ENCODE measurements at regions of chr12 and their contacts with region 1.

Region 1: DNA sequence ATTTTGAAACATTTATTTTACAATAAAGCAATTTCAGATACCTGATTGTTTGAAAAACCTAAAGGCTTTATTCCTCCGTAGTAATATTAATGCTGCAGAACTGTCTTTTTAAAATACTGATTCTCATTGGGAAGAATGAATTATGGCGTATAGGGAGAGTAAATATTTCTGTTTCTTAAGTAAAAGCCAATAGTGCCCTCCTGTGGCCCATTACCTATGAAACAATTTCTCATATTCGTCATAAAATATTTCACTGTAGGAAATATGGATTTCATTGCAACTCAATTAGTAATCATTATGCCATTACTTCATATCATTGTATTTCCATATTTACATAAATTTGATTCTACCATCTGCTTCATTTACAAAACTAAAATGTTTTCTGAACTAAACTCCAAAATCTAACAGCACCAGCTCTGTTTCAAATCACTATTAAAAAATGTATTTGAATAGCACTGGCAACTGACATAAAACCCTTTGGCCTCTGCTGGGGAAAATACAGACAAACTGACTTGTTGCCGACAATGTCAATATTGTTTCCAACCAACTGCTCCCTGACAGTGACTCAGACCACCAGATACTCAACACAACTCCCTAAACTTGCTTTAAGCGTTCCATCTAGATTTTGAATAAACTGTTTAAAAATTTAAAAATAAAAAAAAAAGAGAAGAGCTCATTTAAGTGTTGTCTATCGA is 290.3 kb downstream of the NAV3 start:
- DNase-seq: no peak
- ATAC-seq: no peak
- H3K4me3 ChIP-seq: no peak overlapping the region
- H3K27ac ChIP-seq: no peak overlapping the region
- H3K4me1 ChIP-seq: no peaks in the 10 kb centered on the region
- H3K27me3 ChIP-seq: no peaks in the 10 kb centered on the region
- CTCF ChIP-seq: peak in 4 of 9 donors; percentile 22 to 46 (median 35)

Region 2: GRCh38 chr12:77686760-77687159 is 434.3 kb before region 1 on chr12:
- intact Hi-C with region 1: no loop called
- DNase-seq: no peak
- ATAC-seq: no peak
- H3K4me3 ChIP-seq: no peak overlapping the region
- H3K27ac ChIP-seq: no peak overlapping the region
- H3K4me1 ChIP-seq: peaks cover 0 to 6% (median 0%) of the 10 kb centered on the region in 9 donors
- H3K27me3 ChIP-seq: no peaks in the 10 kb centered on the region
- CTCF ChIP-seq: peak in 1 of 9 donors; percentile 8

Region 3: GRCh38 chr12:77995436-77996167 is 125.4 kb before region 1 on chr12:
- intact Hi-C with region 1: loop called in 6 of 10 experiments (anchors 2 to 10 kb)
- DNase-seq: no peak
- ATAC-seq: no peak
- H3K4me3 ChIP-seq: no peak overlapping the region
- H3K27ac ChIP-seq: no peak overlapping the region
- H3K4me1 ChIP-seq: peaks cover 0 to 8% (median 0%) of the 10 kb centered on the region in 9 donors
- H3K27me3 ChIP-seq: no peaks in the 10 kb centered on the region
- CTCF ChIP-seq: no peak

Region 4: DNA sequence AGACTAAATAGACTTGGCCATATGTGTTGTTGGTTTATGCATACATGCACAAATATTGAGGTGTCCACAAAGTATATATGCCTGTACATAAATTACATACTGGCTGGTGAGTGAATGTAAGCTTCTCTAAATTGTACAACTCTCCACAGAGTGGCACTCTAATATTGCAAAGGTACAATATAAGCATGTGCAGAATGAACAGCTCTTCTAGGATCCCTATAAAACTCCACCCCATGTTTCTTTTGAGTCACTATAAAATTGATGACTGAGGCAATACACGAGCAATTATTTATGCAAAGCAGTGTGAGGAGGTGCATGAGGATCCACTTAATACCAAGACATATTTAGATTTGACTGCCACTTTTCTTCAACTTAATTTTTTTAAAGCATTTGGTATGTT is 118.1 kb before region 1 on chr12:
- intact Hi-C with region 1: loop called in 6 of 10 experiments (anchors 2 to 10 kb)
- DNase-seq: no peak
- ATAC-seq: no peak
- H3K4me3 ChIP-seq: no peak overlapping the region
- H3K27ac ChIP-seq: no peak overlapping the region
- H3K4me1 ChIP-seq: peaks cover 0 to 13% (median 0%) of the 10 kb centered on the region in 9 donors
- H3K27me3 ChIP-seq: no peaks in the 10 kb centered on the region
- CTCF ChIP-seq: peak in 1 of 9 donors; percentile 12